OCI-LY7 (cell line): ENCODE measurements at regions of chr4 and their contacts with region 1.

Region 1: GRCh38 chr4:174828845-174829701 is at the start of gene GLRA3:
- DNase-seq: peak; percentile 97
- H3K4me3 ChIP-seq: peak within 1 kb of the TSS; percentile 73
- H3K27ac ChIP-seq: peak within 1 kb of the TSS; percentile 74
- H3K4me1 ChIP-seq: peaks cover 15% of the 10 kb centered on the region
- CTCF ChIP-seq: no peak
- total RNA-seq, gene GLRA3: 0.21 and 0.92 TPM in 2 replicates

Region 2: DNA sequence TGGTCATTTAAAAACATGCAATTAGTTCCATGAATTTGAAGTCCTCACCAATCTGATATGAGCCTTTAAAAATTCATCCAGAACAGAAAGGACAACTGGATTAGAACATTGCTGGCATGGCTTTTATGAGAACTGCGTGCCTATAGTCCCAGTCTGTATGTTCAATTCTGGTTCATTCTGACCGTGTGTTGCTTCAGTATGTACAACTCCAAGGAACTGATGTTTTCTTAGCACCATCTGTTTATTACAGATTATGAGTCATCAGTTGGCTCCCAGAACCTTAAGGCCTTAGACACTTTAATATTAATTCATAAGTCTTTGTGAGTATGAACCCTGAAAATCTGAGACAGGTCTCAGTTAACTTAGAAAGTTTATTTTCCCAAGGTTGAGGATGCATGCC is 430.3 kb before region 1 on chr4:
- CTCF ChIA-PET with region 1: no interaction called
- POLR2A ChIA-PET with region 1: no interaction called
- intact Hi-C with region 1: no loop called
- DNase-seq: no peak
- H3K4me3 ChIP-seq: no peak overlapping the region
- H3K27ac ChIP-seq: no peak overlapping the region
- H3K4me1 ChIP-seq: no peaks in the 10 kb centered on the region
- CTCF ChIP-seq: no peak

Region 3: GRCh38 chr4:174847801-174848427 is 18.8 kb after region 1 on chr4:
- CTCF ChIA-PET with region 1: no interaction called
- POLR2A ChIA-PET with region 1: no interaction called
- intact Hi-C with region 1: no loop called
- DNase-seq: no peak
- H3K4me3 ChIP-seq: no peak overlapping the region
- H3K27ac ChIP-seq: no peak overlapping the region
- H3K4me1 ChIP-seq: no peaks in the 10 kb centered on the region
- CTCF ChIP-seq: no peak

Region 4: DNA sequence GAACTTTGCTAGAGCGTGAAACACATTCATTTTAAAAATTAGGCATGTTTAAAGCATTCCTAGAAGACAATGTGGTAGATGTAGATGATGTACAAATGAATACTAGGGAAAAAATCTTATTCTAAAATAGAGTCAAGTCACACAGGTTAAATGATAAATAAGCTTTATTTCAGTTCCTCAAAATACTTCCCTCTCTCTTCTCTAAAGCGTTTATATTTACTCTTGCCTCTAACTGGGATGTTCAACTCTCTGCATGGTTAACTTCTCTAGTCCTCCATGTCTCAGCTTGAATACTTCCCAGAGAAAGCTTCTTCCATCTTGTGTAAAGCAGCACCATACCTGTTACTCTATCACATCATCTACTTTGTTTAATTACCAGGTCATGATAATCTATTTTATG is 30.8 kb after region 1 on chr4:
- CTCF ChIA-PET with region 1: no interaction called
- POLR2A ChIA-PET with region 1: interaction called, 3 read pairs
- intact Hi-C with region 1: loop called (anchors 2 kb)
- DNase-seq: peak; percentile 66
- H3K4me3 ChIP-seq: peak overlapping the region; percentile 17
- H3K27ac ChIP-seq: peak overlapping the region; percentile 71
- H3K4me1 ChIP-seq: peaks cover 32% of the 10 kb centered on the region
- CTCF ChIP-seq: no peak

Region 5: DNA sequence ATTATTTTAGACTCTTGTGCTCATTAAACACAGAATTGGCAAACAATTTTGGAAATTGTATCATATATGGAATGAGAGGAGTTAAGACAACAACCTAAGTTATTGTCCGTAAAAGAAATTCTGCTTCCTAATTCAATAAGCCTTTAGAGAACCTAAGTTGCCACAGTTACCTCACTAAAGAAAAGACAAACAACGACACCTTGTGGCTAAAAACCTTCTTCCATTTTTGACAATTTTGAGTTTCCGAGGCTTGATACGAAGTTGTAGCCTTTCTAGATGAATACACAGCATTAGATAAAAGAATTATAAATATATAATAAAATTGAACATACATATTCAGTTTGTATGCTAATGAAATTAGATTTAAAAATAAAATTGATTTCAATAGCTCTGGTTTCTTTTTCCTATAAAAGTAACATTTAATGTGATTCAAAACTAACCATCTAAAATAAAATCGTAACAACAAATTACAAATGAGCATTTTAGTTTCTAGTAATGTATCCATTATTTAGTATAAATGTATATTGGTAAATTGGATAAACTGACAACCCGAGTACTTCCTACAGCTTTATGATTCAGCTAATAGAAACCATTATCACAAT is 707.9 kb after region 1 on chr4:
- CTCF ChIA-PET with region 1: no interaction called
- POLR2A ChIA-PET with region 1: no interaction called
- intact Hi-C with region 1: loop called (anchors 5 kb)
- DNase-seq: peak; percentile 82
- H3K4me3 ChIP-seq: no peak overlapping the region
- H3K27ac ChIP-seq: no peak overlapping the region
- H3K4me1 ChIP-seq: peaks cover 4% of the 10 kb centered on the region
- CTCF ChIP-seq: peak; percentile 89